Activated CD4-positive, alpha-beta T cell treated with anti-CD3 and anti-CD28 coated beads, Interleukin-2, amount 10 ng/mL, durations not matched to agents 24 days and 14 days (primary cell): ENCODE measurements at regions of chr2 and their contacts with region 1.

Region 1: DNA sequence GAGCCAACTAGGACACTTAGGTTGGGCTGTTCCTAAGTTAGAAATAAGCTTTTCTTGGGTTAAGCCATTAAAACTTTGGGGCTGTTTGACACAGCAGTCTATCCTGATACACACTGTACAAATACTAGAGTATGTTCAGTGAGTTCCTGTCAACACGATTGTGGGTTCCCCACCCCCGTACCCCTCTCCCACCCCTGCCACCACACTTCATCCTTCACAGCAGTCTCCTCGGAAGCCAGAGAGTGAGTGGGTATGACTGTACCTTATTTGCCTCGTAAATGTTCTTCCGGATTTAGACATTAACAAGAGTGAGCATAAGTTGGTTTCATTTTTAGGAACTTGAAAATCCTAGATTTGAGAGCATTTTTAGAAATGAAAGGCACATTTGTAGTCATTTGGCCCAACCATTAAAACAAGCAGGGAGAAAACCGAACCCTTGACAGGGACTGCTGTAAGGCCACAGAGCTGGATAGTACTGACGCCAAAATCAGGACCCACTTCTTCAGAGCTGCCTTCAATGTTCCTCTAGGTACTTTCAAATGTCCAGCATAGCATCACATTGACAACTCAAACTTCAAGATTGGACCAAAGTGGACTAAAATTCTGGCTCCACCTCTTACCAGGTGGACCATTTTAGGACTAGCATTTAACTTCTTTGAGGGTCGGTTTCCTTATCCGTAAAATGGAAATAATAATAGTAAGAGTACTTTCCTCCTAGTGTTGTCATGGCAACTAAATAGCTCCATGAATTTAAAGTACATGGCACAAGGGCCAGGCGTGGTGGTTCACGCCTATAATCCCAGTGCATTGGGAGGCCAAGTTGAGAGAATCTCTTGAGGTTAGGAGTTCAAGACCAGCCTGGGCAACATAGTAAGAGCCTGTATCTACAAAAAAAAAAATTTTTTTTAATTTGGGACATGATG is 166.3 kb upstream of the SERTAD2 start:
- DNase-seq: peak; percentile 82
- H3K4me3 Mint-ChIP-seq: peak overlapping the region; percentile 65
- H3K27ac Mint-ChIP-seq: peak overlapping the region; percentile 82
- H3K4me1 Mint-ChIP-seq: peaks cover 23% of the 10 kb centered on the region
- H3K27me3 Mint-ChIP-seq: no peaks in the 10 kb centered on the region

Region 2: GRCh38 chr2:64807417-64807816 is 12.6 kb before region 1 on chr2:
- intact Hi-C with region 1: loop called (anchors 1 kb)
- DNase-seq: peak; percentile 71
- H3K4me3 Mint-ChIP-seq: peak overlapping the region; percentile 15
- H3K27ac Mint-ChIP-seq: peak overlapping the region; percentile 59
- H3K4me1 Mint-ChIP-seq: peaks cover 27% of the 10 kb centered on the region
- H3K27me3 Mint-ChIP-seq: no peaks in the 10 kb centered on the region

Region 3: GRCh38 chr2:64859312-64860212 is 39.5 kb after region 1 on chr2:
- intact Hi-C with region 1: loop called (anchors 5 kb)
- DNase-seq: peak; percentile 64
- H3K4me3 Mint-ChIP-seq: peak overlapping the region; percentile 1
- H3K27ac Mint-ChIP-seq: no peak overlapping the region
- H3K4me1 Mint-ChIP-seq: peaks cover 6% of the 10 kb centered on the region
- H3K27me3 Mint-ChIP-seq: peaks cover 4% of the 10 kb centered on the region